Ascending aorta (tissue), 2 donors: ENCODE measurements at regions of chr5 and their contacts with region 1.

Region 1: GRCh38 chr5:107571621-107572536 is 98.9 kb downstream of the EFNA5 start:
- DNase-seq: peak; percentile 74 to 97
- H3K4me3 ChIP-seq: peak overlapping the region; percentile 61 to 67
- H3K27ac ChIP-seq: peak overlapping the region; percentile 63 to 66
- H3K4me1 ChIP-seq: peaks cover 0 to 10% of the 10 kb centered on the region in 2 donors
- H3K27me3 ChIP-seq: no peaks in the 10 kb centered on the region
- CTCF ChIP-seq: peak; percentile 81 to 95 (median 91)

Region 2: GRCh38 chr5:107253246-107253645 is 318.6 kb before region 1 on chr5:
- intact Hi-C with region 1: loop called (anchors 5 kb)
- DNase-seq: peak in 1 of 2 donors; percentile 66
- H3K4me3 ChIP-seq: peak overlapping the region in 1 of 2 donors; percentile 35
- H3K27ac ChIP-seq: peak overlapping the region; percentile 63 to 67
- H3K4me1 ChIP-seq: peaks cover 3 to 13% of the 10 kb centered on the region in 2 donors
- H3K27me3 ChIP-seq: no peaks in the 10 kb centered on the region
- CTCF ChIP-seq: no peak

Region 3: GRCh38 chr5:107408564-107408963 is 163.3 kb before region 1 on chr5:
- intact Hi-C with region 1: no loop called
- DNase-seq: no peak
- H3K4me3 ChIP-seq: no peak overlapping the region
- H3K27ac ChIP-seq: no peak overlapping the region
- H3K4me1 ChIP-seq: no peaks in the 10 kb centered on the region
- H3K27me3 ChIP-seq: no peaks in the 10 kb centered on the region
- CTCF ChIP-seq: no peak

Region 4: GRCh38 chr5:107425541-107426256 is 146.2 kb before region 1 on chr5:
- intact Hi-C with region 1: loop called (anchors 5 kb)
- DNase-seq: no peak
- H3K4me3 ChIP-seq: no peak overlapping the region
- H3K27ac ChIP-seq: peak overlapping the region; percentile 46 to 58
- H3K4me1 ChIP-seq: peaks cover 2 to 30% of the 10 kb centered on the region in 2 donors
- H3K27me3 ChIP-seq: no peaks in the 10 kb centered on the region
- CTCF ChIP-seq: no peak

Region 5: GRCh38 chr5:107469485-107470294 is 102.2 kb before region 1 on chr5:
- intact Hi-C with region 1: loop called (anchors 5 kb)
- DNase-seq: no peak
- H3K4me3 ChIP-seq: no peak overlapping the region
- H3K27ac ChIP-seq: peak overlapping the region; percentile 63 to 76
- H3K4me1 ChIP-seq: peaks cover 4 to 20% of the 10 kb centered on the region in 2 donors
- H3K27me3 ChIP-seq: no peaks in the 10 kb centered on the region
- CTCF ChIP-seq: no peak

Region 6: DNA sequence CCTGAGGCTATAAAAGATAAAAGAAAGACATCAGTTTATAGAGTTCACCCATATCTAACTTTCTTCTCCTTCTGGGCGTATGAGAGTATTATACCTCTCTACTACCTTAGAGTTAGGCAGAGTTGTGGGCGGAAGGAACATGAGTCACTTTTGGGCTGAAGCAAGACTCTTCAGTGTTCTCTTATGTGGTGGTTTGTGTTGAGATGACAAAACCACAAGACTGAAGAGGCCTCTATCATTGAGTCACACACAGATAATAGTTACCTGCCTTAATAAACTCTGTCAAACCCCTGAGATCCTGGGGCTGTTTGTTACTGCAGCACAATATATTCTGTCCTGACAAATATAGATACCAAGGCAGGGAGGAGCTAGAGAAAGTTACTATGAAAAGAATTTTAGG is 85.4 kb before region 1 on chr5:
- intact Hi-C with region 1: loop called (anchors 5 kb)
- DNase-seq: no peak
- H3K4me3 ChIP-seq: no peak overlapping the region
- H3K27ac ChIP-seq: no peak overlapping the region
- H3K4me1 ChIP-seq: peaks cover 0 to 8% of the 10 kb centered on the region in 2 donors
- H3K27me3 ChIP-seq: no peaks in the 10 kb centered on the region
- CTCF ChIP-seq: no peak

Region 7: DNA sequence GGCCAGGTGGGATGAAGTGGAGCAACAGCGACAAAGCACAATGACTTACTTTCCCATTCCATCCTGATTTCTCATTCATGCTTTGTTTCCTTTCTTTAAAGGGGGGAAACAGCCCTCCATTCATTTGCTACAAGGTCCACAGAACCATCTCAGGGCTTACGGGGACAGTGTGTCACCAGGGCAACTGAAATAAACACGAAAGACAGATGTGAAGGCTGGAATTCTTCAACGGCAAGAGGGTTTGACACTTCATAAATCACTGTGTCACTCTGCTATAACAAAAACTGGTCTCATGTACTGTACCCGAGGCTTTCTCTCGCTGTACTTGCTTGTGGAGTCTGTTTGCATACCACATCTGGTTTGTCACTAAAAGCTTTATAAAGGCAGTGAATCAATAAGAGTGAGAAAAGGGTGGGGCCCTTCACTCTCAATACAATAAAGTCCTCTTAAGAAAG is 52.0 kb before region 1 on chr5:
- intact Hi-C with region 1: no loop called
- DNase-seq: no peak
- H3K4me3 ChIP-seq: no peak overlapping the region
- H3K27ac ChIP-seq: no peak overlapping the region
- H3K4me1 ChIP-seq: peaks cover 0 to 3% of the 10 kb centered on the region in 2 donors
- H3K27me3 ChIP-seq: no peaks in the 10 kb centered on the region
- CTCF ChIP-seq: no peak

Region 8: GRCh38 chr5:107594253-107595045 is 22.6 kb after region 1 on chr5:
- intact Hi-C with region 1: no loop called
- DNase-seq: no peak
- H3K4me3 ChIP-seq: no peak overlapping the region
- H3K27ac ChIP-seq: peak overlapping the region; percentile 50 to 73
- H3K4me1 ChIP-seq: peaks cover 0 to 7% of the 10 kb centered on the region in 2 donors
- H3K27me3 ChIP-seq: no peaks in the 10 kb centered on the region
- CTCF ChIP-seq: no peak